ENCODE measurements at regions of chr2 and their contacts with region 1.

Region 1: GRCh38 chr2:68251187-68251854 is 1.0 kb downstream of the PPP3R1 start:
- DNase-seq: peak; percentile 41
- ATAC-seq: peak; percentile 66
- H3K4me3 Mint-ChIP-seq: peak overlapping the region; percentile 89
- H3K27ac Mint-ChIP-seq: peak overlapping the region; percentile 92
- H3K4me1 Mint-ChIP-seq: peaks cover 35% of the 10 kb centered on the region
- H3K27me3 Mint-ChIP-seq: no peaks in the 10 kb centered on the region
- CTCF ChIP-seq: no peak

Region 2: GRCh38 chr2:68062680-68063387 is 188.5 kb before region 1 on chr2 and contains the start of gene C1D:
- CTCF ChIA-PET with region 1: no interaction called
- POLR2A ChIA-PET with region 1: interaction called, 5 read pairs
- intact Hi-C with region 1: loop called (anchors 1 kb)
- DNase-seq: peak; percentile 94
- ATAC-seq: peak; percentile 92
- H3K4me3 Mint-ChIP-seq: peak within 1 kb of the TSS; percentile 93
- H3K27ac Mint-ChIP-seq: peak within 1 kb of the TSS; percentile 95
- H3K4me1 Mint-ChIP-seq: peaks cover 41% of the 10 kb centered on the region
- H3K27me3 Mint-ChIP-seq: peaks cover 2% of the 10 kb centered on the region
- CTCF ChIP-seq: no peak
- total RNA-seq, gene C1D: 21.5 and 25.2 TPM in 2 replicates

Region 3: DNA sequence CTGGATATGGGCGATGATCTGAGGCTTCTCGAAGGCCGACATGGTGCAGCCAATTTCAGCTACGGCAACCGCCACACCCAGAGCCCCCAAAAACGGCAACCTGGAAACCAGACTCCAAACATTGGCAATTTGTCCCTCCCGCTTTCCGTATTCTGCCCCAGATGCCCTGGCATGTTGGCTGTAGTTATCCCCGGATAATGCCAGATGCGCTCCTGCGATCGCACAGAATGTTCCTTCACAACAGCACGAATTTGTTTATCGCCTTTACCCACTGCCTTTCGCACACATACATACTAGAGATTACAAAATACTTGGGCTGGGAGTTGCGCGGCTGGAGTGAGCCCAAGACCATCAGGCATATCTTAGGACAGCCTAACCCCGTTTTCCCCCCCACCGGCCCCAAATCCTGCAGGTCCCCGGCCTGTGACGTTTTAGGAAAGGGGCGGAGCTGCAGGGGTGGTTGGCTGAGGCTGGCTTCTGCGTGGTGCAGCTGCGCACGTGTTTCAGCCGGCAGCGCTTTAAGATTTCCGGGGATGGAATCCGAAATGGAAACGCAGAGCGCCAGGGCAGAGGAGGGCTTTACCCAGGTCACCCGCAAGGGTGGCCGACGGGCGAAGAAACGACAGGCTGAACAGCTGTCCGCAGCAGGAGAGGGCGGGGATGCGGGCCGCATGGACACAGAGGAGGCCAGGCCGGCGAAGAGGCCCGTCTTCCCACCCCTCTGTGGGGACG is 93.8 kb before region 1 on chr2 and contains the start of gene PNO1:
- CTCF ChIA-PET with region 1: interaction called, 3 read pairs
- POLR2A ChIA-PET with region 1: interaction called, 24 read pairs
- intact Hi-C with region 1: loop called (anchors 1 kb)
- DNase-seq: peak; percentile 94
- ATAC-seq: peak; percentile 95
- H3K4me3 Mint-ChIP-seq: peak within 1 kb of the TSS; percentile 99
- H3K27ac Mint-ChIP-seq: peak within 1 kb of the TSS; percentile 100
- H3K4me1 Mint-ChIP-seq: peaks cover 55% of the 10 kb centered on the region
- H3K27me3 Mint-ChIP-seq: no peaks in the 10 kb centered on the region
- CTCF ChIP-seq: no peak
- total RNA-seq, gene PNO1: 22.1 and 24.9 TPM in 2 replicates

Region 4: DNA sequence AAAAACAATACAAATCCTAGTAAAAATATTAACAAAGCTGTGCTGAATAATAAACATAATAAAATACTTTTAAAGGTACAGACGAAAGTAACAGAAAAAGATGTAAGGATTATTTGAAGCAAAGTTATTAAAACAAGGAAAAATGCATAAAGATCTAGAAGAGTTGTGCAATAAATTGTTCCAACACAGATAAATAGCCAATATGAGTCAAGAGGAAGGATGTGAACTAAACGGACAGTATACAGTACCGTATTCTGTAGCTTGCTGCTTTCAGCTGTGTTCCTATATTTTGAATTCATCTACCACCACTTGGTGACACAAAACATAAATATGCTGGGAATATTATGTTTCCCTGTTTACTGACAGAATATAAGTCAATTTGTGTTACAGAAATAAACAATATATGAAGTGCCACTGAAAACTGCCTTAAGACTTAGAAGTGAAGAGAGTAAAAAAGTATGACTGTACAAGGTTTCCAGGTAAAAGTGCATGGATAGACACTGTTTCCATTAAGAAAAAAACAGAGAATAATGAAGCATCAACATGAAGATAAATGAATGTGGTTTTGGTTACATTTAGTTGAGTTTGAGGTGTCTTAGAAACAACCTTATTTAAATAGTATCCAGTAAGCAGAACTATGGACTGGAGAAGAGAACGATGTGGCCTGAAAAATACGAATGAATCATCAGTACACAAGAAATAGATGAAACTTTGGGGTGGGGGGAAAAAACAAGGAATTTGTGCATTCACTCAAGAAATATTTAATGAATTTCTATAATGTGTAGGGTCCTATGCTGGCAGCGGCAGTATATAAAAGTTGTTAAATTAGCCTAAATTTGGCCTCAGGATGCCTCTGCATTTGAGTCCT is 12.1 kb before region 1 on chr2:
- CTCF ChIA-PET with region 1: interaction called, 3 read pairs
- POLR2A ChIA-PET with region 1: interaction called, 4 read pairs
- intact Hi-C with region 1: loop called (anchors 2 kb)
- DNase-seq: no peak
- ATAC-seq: no peak
- H3K4me3 Mint-ChIP-seq: peak overlapping the region; percentile 39
- H3K27ac Mint-ChIP-seq: peak overlapping the region; percentile 2
- H3K4me1 Mint-ChIP-seq: peaks cover 80% of the 10 kb centered on the region
- H3K27me3 Mint-ChIP-seq: no peaks in the 10 kb centered on the region
- CTCF ChIP-seq: no peak

Region 5: DNA sequence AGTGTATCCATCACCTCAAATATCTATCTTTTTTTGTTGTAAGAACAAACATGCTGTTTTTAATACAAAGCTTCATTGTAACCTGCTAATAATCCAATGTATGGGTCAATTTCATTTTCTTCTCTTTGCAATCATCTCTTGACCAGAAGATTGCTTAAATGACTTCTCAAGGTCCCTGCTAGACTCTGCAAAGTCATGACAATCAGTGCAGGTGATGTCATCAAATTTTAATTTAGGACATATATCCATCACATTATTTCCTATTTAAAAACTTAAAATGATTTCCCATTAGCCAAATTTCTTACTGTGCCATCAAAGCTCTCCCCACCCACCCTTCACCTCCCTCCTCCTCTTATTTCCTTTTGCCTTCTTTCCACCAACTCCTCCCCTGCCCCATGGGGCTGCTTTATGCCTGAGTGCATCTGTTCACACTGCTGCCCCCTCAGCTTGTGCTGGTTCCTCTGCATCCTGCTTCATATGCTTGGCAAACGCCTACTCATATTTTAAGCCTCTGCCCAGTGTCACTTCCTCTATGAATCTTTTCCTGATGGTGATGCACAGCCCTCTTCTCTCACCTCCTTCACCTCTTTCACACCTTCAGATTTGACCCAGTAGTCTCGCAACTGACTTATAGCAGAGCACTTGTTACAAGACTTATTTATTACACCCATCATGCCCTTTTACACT is 134.0 kb after region 1 on chr2:
- CTCF ChIA-PET with region 1: no interaction called
- POLR2A ChIA-PET with region 1: no interaction called
- intact Hi-C with region 1: loop called (anchors 1 kb)
- DNase-seq: no peak
- ATAC-seq: peak; percentile 69
- H3K4me3 Mint-ChIP-seq: peak overlapping the region; percentile 29
- H3K27ac Mint-ChIP-seq: peak overlapping the region; percentile 91
- H3K4me1 Mint-ChIP-seq: peaks cover 97% of the 10 kb centered on the region
- H3K27me3 Mint-ChIP-seq: no peaks in the 10 kb centered on the region
- CTCF ChIP-seq: no peak

Region 6: GRCh38 chr2:68789603-68790002 is 538.3 kb after region 1 on chr2:
- CTCF ChIA-PET with region 1: no interaction called
- POLR2A ChIA-PET with region 1: no interaction called
- intact Hi-C with region 1: loop called (anchors 5 kb)
- DNase-seq: peak; percentile 75
- ATAC-seq: peak; percentile 87
- H3K4me3 Mint-ChIP-seq: peak overlapping the region; percentile 61
- H3K27ac Mint-ChIP-seq: no peak overlapping the region
- H3K4me1 Mint-ChIP-seq: peaks cover 47% of the 10 kb centered on the region
- H3K27me3 Mint-ChIP-seq: no peaks in the 10 kb centered on the region
- CTCF ChIP-seq: no peak

Measured in activated B cell treated with CpG ODN at 0.5 μM for 24 hours (primary cell).